Endothelial cell of umbilical vein (primary cell): ENCODE measurements at regions of chr4 and their contacts with region 1.

Region 1: GRCh38 chr4:10157478-10158332 is 41.1 kb upstream of the WDR1 start:
- DNase-seq: peak; percentile 74
- H3K4me3 ChIP-seq: no peak overlapping the region
- H3K27ac ChIP-seq: no peak overlapping the region
- H3K4me1 ChIP-seq: no peaks in the 10 kb centered on the region
- H3K27me3 ChIP-seq: peaks cover 2 to 7% of the 10 kb centered on the region in 2 experiments
- CTCF ChIP-seq: peak; percentile 79 to 82
- POLR2A ChIP-seq: no peak

Region 2: GRCh38 chr4:8351931-8352367 is 1805.8 kb before region 1 on chr4:
- CTCF ChIA-PET with region 1: no interaction called
- POLR2A ChIA-PET with region 1: no interaction called
- dilution Hi-C with region 1: no loop called
- intact Hi-C with region 1: no loop called
- DNase-seq: no peak
- H3K4me3 ChIP-seq: no peak overlapping the region
- H3K27ac ChIP-seq: no peak overlapping the region
- H3K4me1 ChIP-seq: no peaks in the 10 kb centered on the region
- H3K27me3 ChIP-seq: peaks cover 5% of the 10 kb centered on the region in 2 experiments
- CTCF ChIP-seq: no peak
- POLR2A ChIP-seq: no peak

Region 3: DNA sequence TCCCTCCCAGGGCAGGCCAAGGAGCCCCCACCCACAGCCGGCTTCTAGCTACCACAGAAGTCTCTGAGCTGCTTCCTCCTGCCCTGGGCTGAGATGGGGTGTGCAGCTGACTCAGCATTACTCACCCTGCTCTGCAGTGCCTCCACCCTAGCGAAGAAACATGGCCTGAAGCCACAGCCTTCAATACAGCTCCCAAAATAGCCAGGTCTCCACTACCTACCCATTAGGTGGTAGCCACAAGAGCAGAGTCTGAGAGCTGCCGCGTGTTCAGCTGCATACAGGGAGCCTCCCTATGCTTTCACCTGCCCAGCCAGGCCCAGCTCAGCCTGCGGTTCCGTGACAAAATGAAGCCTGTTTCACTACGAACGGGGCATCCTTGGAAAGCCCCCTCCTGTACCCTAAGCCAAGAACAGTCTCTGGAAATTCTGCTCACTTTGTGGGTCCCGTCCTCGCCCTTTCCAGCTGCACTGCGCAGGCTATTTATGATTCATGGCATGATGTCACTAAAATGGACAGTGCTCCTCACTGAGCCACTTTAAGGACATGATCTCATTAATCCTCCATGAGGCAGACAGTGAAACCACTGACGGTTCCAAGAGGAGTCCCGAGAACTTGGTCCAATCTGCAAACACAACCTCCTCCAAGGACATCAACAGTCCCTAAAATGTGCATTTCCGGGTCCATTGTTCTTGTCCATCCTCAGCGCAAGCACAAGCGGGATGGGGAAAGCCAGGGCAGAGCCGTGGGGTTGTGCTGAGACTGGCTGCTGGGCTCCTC is 61.3 kb before region 1 on chr4:
- CTCF ChIA-PET with region 1: interaction called, 3 read pairs
- POLR2A ChIA-PET with region 1: no interaction called
- dilution Hi-C with region 1: no loop called
- intact Hi-C with region 1: loop called (anchors 5 kb)
- DNase-seq: peak; percentile 71
- H3K4me3 ChIP-seq: no peak overlapping the region
- H3K27ac ChIP-seq: peak overlapping the region; percentile 79
- H3K4me1 ChIP-seq: peaks cover 82% of the 10 kb centered on the region
- H3K27me3 ChIP-seq: no peaks in the 10 kb centered on the region
- CTCF ChIP-seq: no peak
- POLR2A ChIP-seq: peak; percentile 45

Region 4: DNA sequence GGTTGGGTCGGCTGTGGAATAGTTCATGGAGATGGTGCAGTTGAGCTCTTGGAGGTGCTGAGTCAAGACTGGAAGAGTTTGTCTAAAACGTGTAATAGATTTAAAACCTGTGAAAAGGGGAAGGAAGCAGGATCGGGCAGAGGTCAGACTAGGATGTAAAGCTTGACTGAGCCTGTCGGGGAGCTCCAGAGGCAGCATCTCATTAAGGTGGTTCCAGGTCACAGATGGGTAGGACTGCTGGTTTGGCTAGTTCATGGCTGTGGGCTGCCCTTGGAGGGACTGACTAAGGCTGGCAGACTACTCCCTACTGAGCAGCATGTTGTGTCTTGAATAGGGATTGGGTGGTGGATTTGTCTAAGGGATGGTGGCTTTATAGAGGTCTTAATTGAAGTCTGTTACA is 12.7 kb before region 1 on chr4:
- CTCF ChIA-PET with region 1: interaction called, 12 read pairs
- POLR2A ChIA-PET with region 1: no interaction called
- dilution Hi-C with region 1: no loop called
- intact Hi-C with region 1: no loop called
- DNase-seq: no peak
- H3K4me3 ChIP-seq: no peak overlapping the region
- H3K27ac ChIP-seq: no peak overlapping the region
- H3K4me1 ChIP-seq: no peaks in the 10 kb centered on the region
- H3K27me3 ChIP-seq: peaks cover 7 to 17% of the 10 kb centered on the region in 2 experiments
- CTCF ChIP-seq: no peak
- POLR2A ChIP-seq: no peak

Region 5: DNA sequence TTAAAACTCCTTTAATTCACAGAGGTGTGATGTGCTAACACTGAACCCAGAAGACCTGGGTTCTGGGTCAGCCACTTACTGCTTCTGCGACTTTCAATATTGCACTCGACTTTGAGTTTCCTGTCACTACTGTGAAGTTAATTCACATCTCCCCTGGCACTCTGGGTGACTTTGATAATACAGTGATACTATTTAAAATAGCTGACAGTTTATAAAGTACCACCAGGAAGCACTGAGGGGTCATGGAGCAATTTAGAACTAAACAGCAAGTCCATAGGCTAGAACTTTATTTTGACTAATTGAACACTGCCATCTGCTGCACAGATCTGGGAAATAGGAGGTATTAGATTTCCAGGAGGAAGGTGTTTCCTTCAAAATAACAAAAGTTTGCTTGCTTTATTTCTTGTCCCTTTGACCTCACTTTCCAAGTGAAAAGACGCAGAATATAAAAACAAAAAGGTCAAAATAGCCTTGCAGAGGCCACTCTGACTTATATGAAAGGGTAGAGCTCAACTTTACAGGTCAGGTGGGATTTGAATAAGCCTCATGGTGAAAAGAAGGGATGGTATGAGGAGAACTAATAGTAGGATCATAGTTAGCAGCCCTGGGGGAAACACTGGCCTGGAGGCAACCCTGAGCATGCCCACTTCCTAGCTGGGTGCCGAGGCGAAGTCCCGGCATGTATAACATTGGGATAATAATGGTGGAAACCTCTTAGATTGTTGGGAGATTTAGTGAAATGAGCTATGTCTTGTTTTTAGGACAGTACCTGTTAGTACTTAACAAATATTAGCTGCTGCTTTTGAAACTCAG is 246.1 kb after region 1 on chr4:
- CTCF ChIA-PET with region 1: interaction called, 123 read pairs
- POLR2A ChIA-PET with region 1: no interaction called
- dilution Hi-C with region 1: no loop called
- intact Hi-C with region 1: loop called (anchors 1 kb)
- DNase-seq: peak; percentile 60
- H3K4me3 ChIP-seq: no peak overlapping the region
- H3K27ac ChIP-seq: no peak overlapping the region
- H3K4me1 ChIP-seq: no peaks in the 10 kb centered on the region
- H3K27me3 ChIP-seq: peaks cover 2 to 5% of the 10 kb centered on the region in 2 experiments
- CTCF ChIP-seq: peak; percentile 19 to 22
- POLR2A ChIP-seq: no peak